ENCODE measurements at regions of chr1 and their contacts with region 1.

Region 1: GRCh38 chr1:226248091-226248490 is 24.6 kb downstream of the MIXL1 start:
- DNase-seq: no peak
- H3K4me3 ChIP-seq: no peak overlapping the region
- H3K27ac ChIP-seq: no peak overlapping the region
- H3K4me1 ChIP-seq: no peaks in the 10 kb centered on the region
- H3K27me3 ChIP-seq: no peaks in the 10 kb centered on the region
- CTCF ChIP-seq: no peak

Region 2: GRCh38 chr1:224312025-224312424 is 1936.1 kb before region 1 on chr1:
- CTCF ChIA-PET with region 1: interaction called, 16 read pairs
- dilution Hi-C with region 1: no loop called
- in situ Hi-C with region 1: no loop called
- intact Hi-C with region 1: no loop called
- DNase-seq: no peak
- H3K4me3 ChIP-seq: no peak overlapping the region
- H3K27ac ChIP-seq: no peak overlapping the region
- H3K4me1 ChIP-seq: peaks cover 4% of the 10 kb centered on the region
- H3K27me3 ChIP-seq: no peaks in the 10 kb centered on the region
- CTCF ChIP-seq: no peak